ENCODE measurements at regions of chr2 and their contacts with region 1.

Region 1: GRCh38 chr2:105517814-105518705 is 119.2 kb upstream of the FHL2 start:
- DNase-seq: peak; percentile 74
- ATAC-seq: peak; percentile 83 to 87

Region 2: GRCh38 chr2:105369747-105370690 is 148.0 kb before region 1 on chr2:
- intact Hi-C with region 1: loop called (anchors 2 kb)
- DNase-seq: peak; percentile 89
- ATAC-seq: peak; percentile 85 to 86

Region 3: DNA sequence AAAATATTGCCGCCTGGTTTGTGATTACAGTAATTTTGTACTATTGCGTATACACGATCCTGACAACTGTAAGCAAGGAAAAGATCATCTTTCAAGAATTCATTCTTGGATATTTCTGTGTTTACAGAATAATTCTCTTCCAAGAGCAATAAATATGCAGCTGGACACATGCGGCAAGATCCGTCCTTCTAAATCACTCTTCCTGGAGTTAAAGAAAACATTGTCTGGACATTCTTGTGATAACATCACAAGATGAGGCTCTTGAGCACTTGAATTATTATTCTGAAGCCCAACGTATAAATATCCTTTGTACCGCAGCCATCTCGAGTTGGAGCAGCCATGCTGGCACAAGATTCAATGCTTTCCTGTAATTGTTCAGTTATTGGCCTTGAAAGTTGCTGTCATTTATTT is 129.1 kb before region 1 on chr2:
- intact Hi-C with region 1: loop called in 1 of 2 experiments (anchors 5 kb)
- DNase-seq: no peak
- ATAC-seq: peak; percentile 17 to 59